ENCODE measurements at regions of chr11 and their contacts with region 1.

Region 1: GRCh38 chr11:67613960-67614715 is 7.4 kb downstream of the NDUFV1 start:
- DNase-seq: peak; percentile 62 to 96 (median 86)
- ATAC-seq: peak; percentile 91
- H3K4me3 ChIP-seq: peak overlapping the region; percentile 55 to 61
- H3K4me3 Mint-ChIP-seq: peak overlapping the region; percentile 82
- H3K27ac ChIP-seq: peak overlapping the region; percentile 84 to 99
- H3K27ac Mint-ChIP-seq: peak overlapping the region; percentile 98
- H3K4me1 ChIP-seq: peaks cover 35% of the 10 kb centered on the region
- H3K4me1 Mint-ChIP-seq: peaks cover 29% of the 10 kb centered on the region
- H3K27me3 ChIP-seq: no peaks in the 10 kb centered on the region
- H3K27me3 Mint-ChIP-seq: no peaks in the 10 kb centered on the region
- CTCF ChIP-seq: peak; percentile 56

Region 2: GRCh38 chr11:67583247-67584204 is 30.6 kb before region 1 on chr11 and contains the start of gene GSTP1:
- CTCF ChIA-PET with region 1: interaction called, 4 read pairs
- POLR2A ChIA-PET with region 1: no interaction called
- intact Hi-C with region 1: loop called in 1 of 2 experiments (anchors 2 kb)
- DNase-seq: peak; percentile 42 to 90 (median 79)
- ATAC-seq: peak; percentile 86
- H3K4me3 ChIP-seq: peak within 1 kb of the TSS; percentile 61 to 69
- H3K4me3 Mint-ChIP-seq: peak within 1 kb of the TSS; percentile 88
- H3K27ac ChIP-seq: peak within 1 kb of the TSS; percentile 59 to 75
- H3K27ac Mint-ChIP-seq: peak within 1 kb of the TSS; percentile 85
- H3K4me1 ChIP-seq: peaks cover 24% of the 10 kb centered on the region
- H3K4me1 Mint-ChIP-seq: peaks cover 44% of the 10 kb centered on the region
- H3K27me3 ChIP-seq: no peaks in the 10 kb centered on the region
- H3K27me3 Mint-ChIP-seq: no peaks in the 10 kb centered on the region
- CTCF ChIP-seq: peak; percentile 48
- total RNA-seq, gene GSTP1: 56.8 to 56.9 TPM

Region 3: GRCh38 chr11:67732045-67732787 is 118.1 kb after region 1 on chr11:
- CTCF ChIA-PET with region 1: no interaction called
- POLR2A ChIA-PET with region 1: no interaction called
- intact Hi-C with region 1: no loop called
- DNase-seq: peak; percentile 9 to 92 (median 60)
- ATAC-seq: peak; percentile 97
- H3K4me3 ChIP-seq: peak overlapping the region; percentile 41 to 45
- H3K4me3 Mint-ChIP-seq: peak overlapping the region; percentile 76
- H3K27ac ChIP-seq: no peak overlapping the region
- H3K27ac Mint-ChIP-seq: no peak overlapping the region
- H3K4me1 ChIP-seq: no peaks in the 10 kb centered on the region
- H3K4me1 Mint-ChIP-seq: peaks cover 5% of the 10 kb centered on the region
- H3K27me3 ChIP-seq: peaks cover 0 to 2% of the 10 kb centered on the region in 2 experiments
- H3K27me3 Mint-ChIP-seq: peaks cover 17% of the 10 kb centered on the region
- CTCF ChIP-seq: peak; percentile 44

Region 4: DNA sequence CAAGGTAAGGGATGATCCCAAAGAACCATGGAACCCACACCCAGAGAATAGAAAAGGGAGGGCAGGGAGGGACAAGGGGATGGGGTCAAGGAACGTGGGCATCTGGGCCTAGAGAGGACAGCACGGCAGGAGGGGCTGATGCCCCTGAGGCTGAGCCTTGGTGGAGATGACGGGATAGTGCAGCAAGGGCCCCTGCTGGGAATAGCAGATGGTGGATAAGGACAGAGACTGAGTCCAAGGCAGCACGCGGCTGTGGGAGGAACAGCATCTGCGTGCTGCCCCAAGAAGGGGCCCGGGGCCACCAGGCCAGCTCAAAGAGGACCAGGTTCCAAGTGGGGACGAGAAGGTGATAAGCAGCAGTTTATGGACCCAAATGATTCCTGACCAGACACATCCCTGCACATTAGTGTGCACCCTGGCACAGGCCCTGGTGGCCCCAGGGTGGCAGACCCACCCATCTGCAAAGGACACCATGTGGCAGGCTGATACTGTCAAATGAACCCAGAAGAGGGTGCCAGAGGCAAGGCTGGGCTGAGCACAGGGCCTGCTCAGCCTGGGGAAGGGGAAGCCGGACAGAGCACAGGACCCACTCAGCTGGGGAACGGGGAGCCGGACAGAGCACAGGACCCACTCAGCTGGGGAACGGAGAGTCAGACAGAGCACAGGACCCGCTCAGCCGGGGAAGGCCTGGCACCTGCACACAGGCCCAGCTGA is 1149.9 kb after region 1 on chr11:
- CTCF ChIA-PET with region 1: no interaction called
- POLR2A ChIA-PET with region 1: no interaction called
- intact Hi-C with region 1: no loop called
- DNase-seq: no peak
- ATAC-seq: no peak
- H3K4me3 ChIP-seq: no peak overlapping the region
- H3K4me3 Mint-ChIP-seq: no peak overlapping the region
- H3K27ac ChIP-seq: no peak overlapping the region
- H3K27ac Mint-ChIP-seq: no peak overlapping the region
- H3K4me1 ChIP-seq: no peaks in the 10 kb centered on the region
- H3K4me1 Mint-ChIP-seq: no peaks in the 10 kb centered on the region
- H3K27me3 ChIP-seq: no peaks in the 10 kb centered on the region
- H3K27me3 Mint-ChIP-seq: no peaks in the 10 kb centered on the region
- CTCF ChIP-seq: no peak